ENCODE measurements at regions of chr7 and their contacts with region 1.

Region 1: DNA sequence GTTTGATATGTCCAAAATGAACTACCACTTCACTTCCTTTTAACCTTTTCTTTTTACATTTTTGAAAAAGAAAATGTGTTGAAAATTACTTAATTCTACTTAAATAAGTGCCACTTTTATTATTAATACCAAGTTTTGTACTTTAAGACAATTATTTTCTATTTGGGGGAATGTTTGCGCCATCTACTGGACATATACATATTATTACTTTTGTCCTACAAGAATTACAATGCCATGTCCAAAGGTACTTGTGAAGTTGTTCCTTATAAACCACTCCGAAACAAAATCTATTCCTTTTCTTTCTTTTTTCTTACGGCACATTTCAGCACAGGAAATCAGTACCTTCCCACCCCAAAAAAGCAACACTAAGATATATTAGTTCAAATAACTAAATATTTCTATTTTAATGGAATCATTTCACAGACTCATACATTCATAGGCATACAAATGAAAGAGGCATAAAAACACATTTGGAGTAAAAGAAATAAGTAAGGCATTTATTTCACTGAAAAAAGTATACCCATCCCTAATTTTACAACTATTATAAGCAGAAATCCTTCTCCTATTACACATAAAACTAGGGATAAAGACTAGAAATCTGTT is 169.9 kb downstream of the RNF133 start:
- DNase-seq: no peak
- ATAC-seq: no peak

Region 2: DNA sequence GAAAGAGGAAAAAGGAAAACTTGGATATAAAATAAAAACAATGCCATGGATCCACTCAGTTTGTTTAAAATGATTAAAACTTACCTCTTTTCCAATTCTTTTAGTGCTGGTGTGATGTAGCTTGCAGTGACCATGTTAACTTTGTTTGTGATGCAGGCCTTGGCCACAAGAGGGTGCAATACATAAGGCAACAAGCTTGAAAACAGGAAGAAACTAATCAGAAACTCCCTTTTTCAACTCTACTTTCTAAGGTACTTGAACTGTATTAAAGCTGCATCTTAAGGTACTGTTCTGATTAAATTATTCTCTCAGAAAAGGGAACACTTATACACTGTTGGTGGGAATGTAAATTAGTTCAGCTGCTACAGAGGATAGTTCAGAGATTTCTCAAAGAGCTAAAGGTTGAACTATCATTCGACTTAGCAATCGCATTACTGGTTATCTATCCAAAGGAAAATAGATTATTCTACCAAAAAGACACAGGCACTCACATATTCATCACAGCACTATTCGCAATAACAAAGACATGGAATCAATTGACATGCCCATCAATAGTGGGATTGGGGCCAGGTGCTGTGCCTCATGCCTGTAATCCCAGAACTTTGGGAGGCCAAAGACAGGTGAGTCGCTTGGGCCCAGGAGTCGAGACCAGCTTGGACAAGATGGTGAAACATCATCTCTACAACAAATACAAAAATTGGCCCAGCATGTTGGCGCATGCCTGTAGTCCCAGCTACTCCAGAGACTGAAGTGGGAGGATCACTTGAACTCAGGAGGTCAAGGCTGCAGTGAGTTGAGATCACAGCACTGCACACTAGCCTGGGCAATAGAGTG is 435.8 kb before region 1 on chr7:
- intact Hi-C with region 1: loop called (anchors 10 kb)
- DNase-seq: no peak
- ATAC-seq: no peak

Region 3: DNA sequence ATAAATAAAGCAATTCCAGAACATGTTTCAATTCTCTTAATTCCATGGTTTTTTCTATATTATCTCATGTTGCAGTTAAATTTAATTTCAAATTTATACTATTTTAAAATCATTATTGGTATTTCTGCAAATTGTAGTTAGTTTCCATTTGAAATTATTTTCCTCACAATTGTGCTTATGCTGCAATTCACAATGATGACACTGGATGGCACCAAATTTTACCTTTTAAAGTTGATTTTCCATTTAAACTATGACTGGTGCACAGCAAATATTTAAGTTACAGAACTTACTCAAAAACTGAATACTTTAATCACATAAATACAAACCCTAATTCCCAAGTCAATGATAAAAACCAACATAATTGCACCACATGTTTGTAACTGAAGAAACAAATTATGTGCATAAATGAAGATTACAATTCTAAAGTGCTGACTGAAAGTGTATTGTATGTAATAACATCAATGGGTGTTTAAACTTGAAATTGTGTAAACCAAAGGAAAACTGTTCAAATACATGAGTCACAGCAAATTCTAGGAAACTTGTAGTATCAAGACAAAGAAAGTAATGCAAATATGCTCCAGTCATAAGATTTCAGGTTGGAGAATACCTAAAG is 309.6 kb before region 1 on chr7:
- intact Hi-C with region 1: loop called (anchors 2 kb)
- DNase-seq: no peak
- ATAC-seq: no peak

Measured in Right ventricle myocardium inferior (tissue), 1 donor.